Activated T-helper 2 cell treated with anti-CD3 and anti-CD28 coated beads, Interferon-gamma antibody, Interleukin-2, Interleukin-4, amounts not matched to agents 10 μg/mL and 5 μg/mL and 100 μg/mL, durations not matched to agents 14 hours and 24 hours and 36 hours (primary cell): ENCODE measurements at regions of chr10 and their contacts with region 1.

Region 1: DNA sequence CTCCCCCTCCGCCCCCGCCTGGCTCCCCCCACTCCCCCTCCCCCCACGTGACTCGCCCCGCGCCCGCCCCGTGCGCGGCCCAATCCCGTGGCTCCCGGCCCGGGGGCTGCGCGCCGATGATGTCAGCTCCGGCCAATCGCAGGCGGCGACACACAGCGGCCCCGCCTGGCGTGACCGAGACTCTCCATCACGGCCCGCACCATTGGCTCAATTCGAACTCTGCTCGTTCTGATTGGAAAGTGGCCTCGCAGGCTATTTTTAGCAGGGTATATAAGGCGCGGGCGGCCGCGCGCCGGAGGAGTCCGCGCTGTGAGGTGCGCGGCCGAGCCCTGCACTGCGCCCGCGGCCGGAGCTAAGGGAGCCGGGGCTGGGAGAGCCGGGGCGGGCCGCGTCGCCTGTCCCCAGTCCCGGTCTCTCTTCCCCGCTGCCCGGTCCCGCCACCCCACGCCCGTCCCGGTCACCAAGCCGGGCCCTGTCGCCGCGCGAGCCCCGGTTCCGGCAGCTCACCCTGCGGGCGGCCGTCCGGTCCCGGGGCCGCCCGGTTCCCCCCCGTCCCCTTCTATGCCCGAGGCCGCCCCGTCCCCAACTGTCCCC is 345 bp upstream of the KLF6 start:
- DNase-seq: peak; percentile 99
- H3K4me3 Mint-ChIP-seq: peak overlapping the region; percentile 83
- H3K27ac Mint-ChIP-seq: peak overlapping the region; percentile 96
- H3K4me1 Mint-ChIP-seq: peaks cover 32% of the 10 kb centered on the region
- H3K27me3 Mint-ChIP-seq: no peaks in the 10 kb centered on the region

Region 2: GRCh38 chr10:3740157-3740871 is 45.0 kb before region 1 on chr10:
- intact Hi-C with region 1: loop called (anchors 5 kb)
- DNase-seq: no peak
- H3K4me3 Mint-ChIP-seq: no peak overlapping the region
- H3K27ac Mint-ChIP-seq: no peak overlapping the region
- H3K4me1 Mint-ChIP-seq: peaks cover 27% of the 10 kb centered on the region
- H3K27me3 Mint-ChIP-seq: peaks cover 5% of the 10 kb centered on the region

Region 3: DNA sequence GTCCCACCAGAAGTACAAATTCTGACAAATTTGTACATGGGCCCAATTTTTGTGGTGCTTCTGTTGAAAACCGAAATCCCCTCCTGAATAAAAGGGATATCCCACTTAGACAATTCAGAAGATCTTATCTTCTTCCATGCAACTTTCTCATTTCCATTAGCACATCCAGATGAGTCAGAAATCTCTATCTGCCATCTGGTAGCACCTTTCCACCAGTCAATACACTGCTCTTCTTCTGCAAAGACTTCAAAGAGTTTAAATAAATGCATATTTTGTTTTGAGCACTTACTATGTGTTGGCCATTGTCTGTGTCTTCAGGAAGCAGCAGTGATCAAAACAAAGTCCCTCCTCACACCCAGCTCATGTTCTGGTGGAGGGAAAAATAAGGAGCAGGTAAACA is 12.4 kb after region 1 on chr10:
- intact Hi-C with region 1: loop called (anchors 1 kb)
- DNase-seq: no peak
- H3K4me3 Mint-ChIP-seq: peak overlapping the region; percentile 58
- H3K27ac Mint-ChIP-seq: peak overlapping the region; percentile 96
- H3K4me1 Mint-ChIP-seq: peaks cover 53% of the 10 kb centered on the region
- H3K27me3 Mint-ChIP-seq: no peaks in the 10 kb centered on the region

Region 4: GRCh38 chr10:4260483-4261124 is 475.2 kb after region 1 on chr10:
- intact Hi-C with region 1: no loop called
- DNase-seq: no peak
- H3K4me3 Mint-ChIP-seq: no peak overlapping the region
- H3K27ac Mint-ChIP-seq: no peak overlapping the region
- H3K4me1 Mint-ChIP-seq: no peaks in the 10 kb centered on the region
- H3K27me3 Mint-ChIP-seq: peaks cover 17% of the 10 kb centered on the region